Activated B cell treated with CpG ODN at 0.5 μM for 24 hours (primary cell): ENCODE measurements at regions of chr1 and their contacts with region 1.

Region 1: GRCh38 chr1:205528887-205529825 is 24.7 kb downstream of the CDK18 start:
- DNase-seq: peak; percentile 84
- ATAC-seq: peak; percentile 92
- H3K4me3 Mint-ChIP-seq: peak overlapping the region; percentile 72
- H3K27ac Mint-ChIP-seq: no peak overlapping the region
- H3K4me1 Mint-ChIP-seq: peaks cover 4% of the 10 kb centered on the region
- H3K27me3 Mint-ChIP-seq: peaks cover 3% of the 10 kb centered on the region
- CTCF ChIP-seq: peak; percentile 58

Region 2: DNA sequence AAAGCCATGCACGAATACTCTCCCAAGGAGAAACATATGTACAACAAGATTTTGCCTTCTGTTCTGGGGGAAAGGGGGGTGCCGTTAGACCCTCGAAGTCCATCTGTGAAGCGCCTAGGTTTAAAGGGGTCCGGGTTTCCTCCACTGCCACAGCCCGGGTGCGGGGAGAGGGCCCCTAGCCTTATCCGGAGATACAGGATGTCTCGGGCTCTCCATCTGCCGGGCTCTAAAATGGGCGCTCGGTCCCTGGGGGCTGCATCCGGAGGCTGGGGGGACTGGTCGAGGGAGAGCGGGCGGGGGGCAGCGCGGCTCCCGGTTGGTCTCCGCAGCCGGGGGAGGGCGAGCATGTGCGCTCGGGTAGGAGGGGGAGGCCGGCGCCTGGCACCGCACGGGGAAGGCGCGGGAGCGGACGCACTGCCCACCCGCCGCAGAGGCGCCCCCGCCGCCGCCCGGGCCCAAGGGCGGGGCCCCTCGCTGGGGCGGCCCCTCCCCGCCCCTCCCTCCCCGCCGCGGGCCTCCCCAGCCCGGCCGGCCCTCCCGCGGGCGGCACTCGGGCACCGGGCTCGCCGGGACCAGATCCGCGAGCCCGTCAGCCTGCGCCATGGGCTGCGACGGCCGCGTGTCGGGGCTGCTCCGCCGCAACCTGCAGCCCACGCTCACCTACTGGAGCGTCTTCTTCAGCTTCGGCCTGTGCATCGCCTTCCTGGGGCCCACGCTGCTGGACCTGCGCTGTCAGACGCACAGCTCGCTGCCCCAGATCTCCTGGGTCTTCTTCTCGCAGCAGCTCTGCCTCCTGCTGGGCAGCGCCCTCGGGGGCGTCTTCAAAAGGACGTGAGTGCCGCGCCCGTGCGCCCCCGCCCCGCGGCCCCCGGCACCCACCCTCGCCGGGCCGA is 39.6 kb after region 1 on chr1:
- CTCF ChIA-PET with region 1: interaction called, 5 read pairs
- POLR2A ChIA-PET with region 1: interaction called, 3 read pairs
- intact Hi-C with region 1: loop called (anchors 5 kb)
- DNase-seq: peak; percentile 29
- ATAC-seq: peak; percentile 64
- H3K4me3 Mint-ChIP-seq: peak overlapping the region; percentile 75
- H3K27ac Mint-ChIP-seq: no peak overlapping the region
- H3K4me1 Mint-ChIP-seq: peaks cover 6% of the 10 kb centered on the region
- H3K27me3 Mint-ChIP-seq: peaks cover 46% of the 10 kb centered on the region
- CTCF ChIP-seq: no peak

Region 3: GRCh38 chr1:205584732-205585131 is 55.6 kb after region 1 on chr1:
- CTCF ChIA-PET with region 1: interaction called, 3 read pairs
- POLR2A ChIA-PET with region 1: no interaction called
- intact Hi-C with region 1: loop called (anchors 1 kb)
- DNase-seq: no peak
- ATAC-seq: no peak
- H3K4me3 Mint-ChIP-seq: no peak overlapping the region
- H3K27ac Mint-ChIP-seq: no peak overlapping the region
- H3K4me1 Mint-ChIP-seq: peaks cover 33% of the 10 kb centered on the region
- H3K27me3 Mint-ChIP-seq: peaks cover 2% of the 10 kb centered on the region
- CTCF ChIP-seq: no peak

Region 4: DNA sequence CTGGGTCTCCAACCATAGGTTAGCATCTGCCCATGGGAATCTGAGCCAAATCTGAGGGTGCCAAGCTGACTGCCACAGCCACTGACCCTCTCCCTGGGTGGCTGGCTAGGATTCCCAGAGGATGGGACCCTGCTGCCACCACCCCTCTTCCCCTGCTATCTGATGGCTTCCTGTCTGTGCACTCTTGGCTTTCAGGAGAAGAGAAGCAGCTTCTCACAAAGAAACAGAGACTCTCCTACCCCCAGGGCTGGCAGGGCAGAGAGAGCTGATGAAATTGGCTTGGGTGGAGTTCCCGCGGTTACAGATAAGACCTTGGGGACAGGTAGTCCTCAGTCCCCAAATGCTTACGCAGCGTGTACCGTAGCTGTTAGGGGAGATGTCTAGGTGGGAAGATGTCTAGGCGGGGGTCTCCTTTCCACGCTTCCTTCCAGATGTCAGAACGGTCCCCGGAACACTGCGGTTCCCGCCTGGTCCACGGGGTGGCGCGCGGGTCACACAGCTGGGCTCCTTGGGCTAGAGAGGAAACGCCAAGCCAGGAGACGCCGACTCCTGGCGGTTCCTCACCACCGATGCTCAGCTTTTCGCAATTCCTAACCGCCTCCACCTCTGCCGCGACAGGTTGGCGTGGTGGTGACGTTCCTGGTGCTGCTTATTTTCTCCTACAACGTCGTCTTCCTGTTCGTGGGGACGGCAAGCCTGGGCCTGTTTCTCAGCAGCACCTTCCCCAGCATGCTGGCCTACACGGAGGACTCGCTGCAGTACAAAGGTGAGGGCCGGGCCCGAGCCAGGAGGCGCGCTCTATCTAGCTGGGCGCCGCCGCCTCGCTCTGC is 62.6 kb after region 1 on chr1:
- CTCF ChIA-PET with region 1: interaction called, 35 read pairs
- POLR2A ChIA-PET with region 1: no interaction called
- intact Hi-C with region 1: loop called (anchors 1 kb)
- DNase-seq: peak; percentile 89
- ATAC-seq: peak; percentile 89
- H3K4me3 Mint-ChIP-seq: peak overlapping the region; percentile 90
- H3K27ac Mint-ChIP-seq: peak overlapping the region; percentile 90
- H3K4me1 Mint-ChIP-seq: peaks cover 48% of the 10 kb centered on the region
- H3K27me3 Mint-ChIP-seq: no peaks in the 10 kb centered on the region
- CTCF ChIP-seq: peak; percentile 87